Natural killer cell (primary cell): ENCODE measurements at regions of chr11 and their contacts with region 1.

Region 1: GRCh38 chr11:76807206-76807875 is 24.2 kb downstream of the TSKU start:
- DNase-seq: peak; percentile 42 to 80
- ATAC-seq: peak; percentile 50 to 77 (median 69)
- H3K4me3 ChIP-seq: no peak overlapping the region
- H3K4me3 Mint-ChIP-seq: no peak overlapping the region
- H3K27ac ChIP-seq: no peak overlapping the region
- H3K27ac Mint-ChIP-seq: no peak overlapping the region
- H3K4me1 ChIP-seq: peaks cover 5% of the 10 kb centered on the region
- H3K4me1 Mint-ChIP-seq: peaks cover 0 to 6% of the 10 kb centered on the region in 2 donors
- H3K27me3 ChIP-seq: no peaks in the 10 kb centered on the region
- H3K27me3 Mint-ChIP-seq: peaks cover 19 to 30% of the 10 kb centered on the region in 2 donors
- CTCF ChIP-seq: peak; percentile 53

Region 2: GRCh38 chr11:76919887-76920746 is 112.8 kb after region 1 on chr11:
- intact Hi-C with region 1: loop called (anchors 5 kb)
- DNase-seq: peak; percentile 36 to 86
- ATAC-seq: peak; percentile 75 to 84 (median 78)
- H3K4me3 ChIP-seq: no peak overlapping the region
- H3K4me3 Mint-ChIP-seq: peak overlapping the region; percentile 75
- H3K27ac ChIP-seq: no peak overlapping the region
- H3K27ac Mint-ChIP-seq: peak overlapping the region in 1 of 2 donors; percentile 35
- H3K4me1 ChIP-seq: peaks cover 4% of the 10 kb centered on the region
- H3K4me1 Mint-ChIP-seq: peaks cover 11 to 12% of the 10 kb centered on the region in 2 donors
- H3K27me3 ChIP-seq: no peaks in the 10 kb centered on the region
- H3K27me3 Mint-ChIP-seq: no peaks in the 10 kb centered on the region
- CTCF ChIP-seq: peak; percentile 89